SK-N-SH (cell line): ENCODE measurements at regions of chr3 and their contacts with region 1.

Region 1: DNA sequence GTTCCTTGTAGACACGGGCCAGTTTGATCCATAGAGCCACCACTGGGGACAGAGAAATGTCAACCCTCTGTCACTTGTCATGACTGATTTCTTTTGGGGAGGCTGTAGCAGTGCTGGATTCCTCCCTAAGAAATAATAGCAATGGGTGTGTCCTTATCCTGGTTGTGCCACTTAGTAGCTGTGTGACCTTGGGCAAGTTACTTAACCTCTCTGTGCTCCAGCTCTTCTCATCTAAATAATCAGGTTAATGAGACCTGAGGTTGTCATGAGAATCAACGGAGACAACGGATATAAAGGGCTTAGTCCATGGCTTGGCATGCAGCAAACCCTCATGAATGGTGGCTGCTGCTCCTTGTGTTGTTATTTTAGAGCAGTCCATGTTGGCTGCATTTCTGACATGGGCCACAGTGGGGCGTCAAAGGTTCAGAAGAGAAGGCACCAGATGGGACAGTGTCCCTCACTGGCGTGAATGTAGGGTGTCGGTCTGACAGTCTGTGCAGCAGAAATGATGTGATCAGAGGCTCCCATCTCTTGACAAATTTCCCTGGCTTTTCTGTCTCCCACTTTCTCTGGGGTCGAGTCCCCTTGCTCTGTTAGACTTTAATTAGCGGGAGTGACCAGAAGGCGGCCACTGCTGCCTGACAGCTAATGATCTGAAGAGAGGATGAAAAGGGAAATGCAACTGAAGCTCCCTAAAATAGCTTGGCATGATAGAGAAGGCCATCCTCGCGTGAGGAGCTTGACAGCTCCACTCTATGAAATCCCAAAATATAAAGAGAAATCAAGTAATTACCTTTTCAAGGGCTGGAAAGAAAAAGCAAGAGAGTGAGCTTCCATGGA is 209.4 kb downstream of the CADPS start:
- DNase-seq: peak; percentile 50
- H3K4me3 ChIP-seq: peak overlapping the region in 1 of 2 experiments; percentile 14; a peak in 1 of 4 replicates
- H3K27ac ChIP-seq: no peak overlapping the region
- H3K4me1 ChIP-seq: peaks cover 0 to 12% of the 10 kb centered on the region in 2 experiments; a peak in 2 of 4 replicates
- H3K27me3 ChIP-seq: no peaks in the 10 kb centered on the region
- CTCF ChIP-seq: peak; percentile 93
- EP300 ChIP-seq: no peak
- RAD21 ChIP-seq: peak; percentile 96

Region 2: DNA sequence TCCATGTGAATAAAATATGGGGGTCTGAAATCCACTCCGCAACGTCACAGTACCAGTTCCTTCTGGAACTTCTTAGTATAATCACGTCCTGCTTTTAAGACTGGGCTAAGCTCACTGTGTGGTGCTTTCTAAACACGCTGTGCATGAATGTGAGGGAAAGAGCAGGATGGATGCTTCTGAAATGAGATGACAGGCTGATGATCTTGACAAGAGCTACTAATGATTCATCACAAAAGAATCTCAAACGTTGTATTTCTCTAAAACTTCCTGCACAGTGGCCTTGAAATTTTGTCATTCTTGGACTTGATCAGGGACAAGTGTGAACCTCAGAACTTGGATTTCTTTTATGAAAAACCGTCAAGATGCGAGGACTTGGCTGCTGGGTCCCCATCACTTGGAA is 12.0 kb before region 1 on chr3:
- CTCF ChIA-PET with region 1: interaction called, 13 read pairs
- POLR2A ChIA-PET with region 1: no interaction called
- DNase-seq: no peak
- H3K4me3 ChIP-seq: no peak overlapping the region
- H3K27ac ChIP-seq: no peak overlapping the region
- H3K4me1 ChIP-seq: no peaks in the 10 kb centered on the region
- H3K27me3 ChIP-seq: no peaks in the 10 kb centered on the region
- CTCF ChIP-seq: no peak
- EP300 ChIP-seq: no peak
- RAD21 ChIP-seq: no peak

Region 3: GRCh38 chr3:62686506-62687286 is 20.9 kb after region 1 on chr3:
- CTCF ChIA-PET with region 1: interaction called, 12 read pairs
- POLR2A ChIA-PET with region 1: interaction called, 3 read pairs
- DNase-seq: no peak
- H3K4me3 ChIP-seq: no peak overlapping the region
- H3K27ac ChIP-seq: no peak overlapping the region
- H3K4me1 ChIP-seq: no peaks in the 10 kb centered on the region
- H3K27me3 ChIP-seq: no peaks in the 10 kb centered on the region
- CTCF ChIP-seq: no peak
- EP300 ChIP-seq: no peak
- RAD21 ChIP-seq: no peak

Region 4: GRCh38 chr3:62818347-62818746 is 152.5 kb after region 1 on chr3:
- CTCF ChIA-PET with region 1: no interaction called
- POLR2A ChIA-PET with region 1: no interaction called
- DNase-seq: no peak
- H3K4me3 ChIP-seq: no peak overlapping the region
- H3K27ac ChIP-seq: no peak overlapping the region
- H3K4me1 ChIP-seq: peaks cover 0 to 8% of the 10 kb centered on the region in 2 experiments; a peak in 1 of 4 replicates
- H3K27me3 ChIP-seq: no peaks in the 10 kb centered on the region
- CTCF ChIP-seq: no peak
- EP300 ChIP-seq: no peak
- RAD21 ChIP-seq: no peak

Region 5: DNA sequence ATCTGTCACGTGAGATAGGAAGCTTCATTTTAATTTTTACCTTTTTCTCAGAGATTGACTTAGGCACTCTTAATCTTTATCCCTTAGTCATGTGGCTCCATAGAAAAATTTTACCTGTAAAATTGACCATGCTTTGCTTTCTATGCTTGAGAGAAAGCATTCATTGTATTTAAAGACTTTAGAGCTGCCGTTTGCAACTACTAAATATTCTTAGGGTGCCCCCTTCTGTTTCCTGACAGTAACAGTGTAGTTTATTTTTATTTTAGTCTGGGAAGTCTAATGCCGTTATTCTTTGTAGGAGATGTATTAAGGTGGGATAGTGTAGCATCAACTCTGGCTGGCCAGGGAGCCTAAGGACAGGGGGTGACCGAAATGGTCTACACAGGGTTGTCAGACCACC is 527.8 kb after region 1 on chr3:
- CTCF ChIA-PET with region 1: interaction called, 126 read pairs
- POLR2A ChIA-PET with region 1: interaction called, 4 read pairs
- DNase-seq: peak; percentile 37
- H3K4me3 ChIP-seq: no peak overlapping the region; a peak in 1 of 4 replicates
- H3K27ac ChIP-seq: no peak overlapping the region
- H3K4me1 ChIP-seq: no peaks in the 10 kb centered on the region
- H3K27me3 ChIP-seq: no peaks in the 10 kb centered on the region
- CTCF ChIP-seq: peak; percentile 83
- EP300 ChIP-seq: no peak
- RAD21 ChIP-seq: peak; percentile 93